ENCODE measurements at regions of chr6 and their contacts with region 1.

Region 1: GRCh38 chr6:110876170-110876773 is 1.7 kb downstream of the AMD1 start:
- DNase-seq: peak; percentile 77 to 78
- H3K4me3 ChIP-seq: peak overlapping the region; percentile 72 to 98 (median 93)
- H3K27ac ChIP-seq: peak overlapping the region; percentile 94 to 97
- H3K4me1 ChIP-seq: peaks cover 0 to 8% of the 10 kb centered on the region in 2 donors
- H3K27me3 ChIP-seq: no peaks in the 10 kb centered on the region
- CTCF ChIP-seq: no peak
- POLR2A ChIP-seq: peak; percentile 41

Region 2: GRCh38 chr6:110201151-110201884 is 675.0 kb before region 1 on chr6:
- intact Hi-C with region 1: no loop called
- DNase-seq: no peak
- H3K4me3 ChIP-seq: no peak overlapping the region
- H3K27ac ChIP-seq: no peak overlapping the region
- H3K4me1 ChIP-seq: no peaks in the 10 kb centered on the region
- H3K27me3 ChIP-seq: no peaks in the 10 kb centered on the region
- CTCF ChIP-seq: no peak
- POLR2A ChIP-seq: no peak

Region 3: DNA sequence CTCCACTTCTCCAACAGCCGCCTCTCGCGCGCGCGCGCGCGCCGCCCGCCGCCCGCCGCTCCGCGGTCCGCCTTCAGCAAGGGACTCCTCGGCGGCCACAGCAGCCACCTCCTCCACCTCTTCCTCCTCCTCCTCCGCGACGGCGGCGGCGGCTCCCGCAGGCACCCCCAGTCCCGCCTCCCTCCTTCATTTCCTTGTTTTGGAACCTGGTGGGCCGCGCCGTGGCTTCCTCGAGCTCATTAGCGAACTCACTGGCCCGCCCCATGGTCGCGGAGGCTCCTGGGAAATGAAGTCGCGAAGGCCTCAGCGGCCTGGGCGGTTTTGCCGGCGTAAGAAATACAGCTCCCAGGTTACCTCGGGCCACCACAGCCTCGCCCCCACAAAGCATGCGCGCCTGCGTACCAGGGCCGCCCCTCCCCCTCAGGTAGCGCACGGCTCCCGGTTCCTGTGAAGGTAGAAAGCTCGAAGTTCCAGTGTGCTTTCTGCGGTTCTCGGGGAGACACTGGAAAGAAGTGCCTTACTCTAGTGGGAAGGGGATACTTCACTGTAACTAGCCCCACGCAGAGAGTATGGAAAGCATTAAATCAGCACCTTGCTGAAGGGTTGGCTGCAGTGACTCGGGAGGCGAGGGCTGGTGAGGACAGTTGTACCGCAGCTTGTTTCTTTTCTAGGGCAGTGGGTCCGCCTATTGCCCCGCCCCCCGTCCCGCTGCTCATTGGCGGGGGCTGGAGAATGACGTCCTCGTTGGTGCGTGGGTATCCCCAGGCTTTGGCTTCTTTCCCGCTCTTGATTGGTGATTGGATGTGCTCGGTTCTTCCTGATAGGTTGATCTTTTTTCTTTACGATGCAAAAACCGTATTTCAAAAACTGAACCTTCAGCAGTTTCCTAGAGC is 60.8 kb before region 1 on chr6 and contains the start of gene CDK19:
- intact Hi-C with region 1: loop called (anchors 5 kb)
- DNase-seq: peak; percentile 97 to 98
- H3K4me3 ChIP-seq: peak within 1 kb of the TSS; percentile 86 to 88 (median 86)
- H3K27ac ChIP-seq: peak within 1 kb of the TSS; percentile 92 to 99
- H3K4me1 ChIP-seq: no peaks in the 10 kb centered on the region
- H3K27me3 ChIP-seq: no peaks in the 10 kb centered on the region
- CTCF ChIP-seq: no peak
- POLR2A ChIP-seq: peak; percentile 32
- total RNA-seq, gene CDK19: 14.1 to 17.9 (median 17.9) TPM

Region 4: DNA sequence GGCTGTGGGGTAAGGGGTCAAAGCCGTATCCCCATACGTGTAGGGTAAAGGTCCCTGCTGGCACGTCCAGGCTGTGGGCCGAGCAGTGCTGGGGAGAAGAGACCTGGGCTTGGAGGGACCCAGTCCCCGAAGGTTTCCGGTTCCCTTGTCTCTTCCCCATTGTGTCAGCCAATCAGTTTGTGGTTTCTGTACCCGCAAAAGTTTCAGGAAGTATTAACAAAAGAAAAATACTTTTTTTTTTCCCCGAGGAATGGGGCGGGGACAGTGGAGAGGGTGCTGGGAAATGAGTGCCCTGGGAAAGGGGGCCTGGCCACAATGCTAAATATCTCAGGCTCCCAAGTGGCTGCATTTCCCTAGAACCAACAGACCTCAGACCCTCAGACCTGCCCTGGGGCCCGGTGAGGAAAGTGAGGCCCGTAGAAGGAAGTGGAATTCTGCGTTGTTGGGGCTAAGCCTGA is 16.9 kb before region 1 on chr6:
- intact Hi-C with region 1: no loop called
- DNase-seq: no peak
- H3K4me3 ChIP-seq: peak overlapping the region in 1 of 3 donors; percentile 8
- H3K27ac ChIP-seq: no peak overlapping the region
- H3K4me1 ChIP-seq: no peaks in the 10 kb centered on the region
- H3K27me3 ChIP-seq: no peaks in the 10 kb centered on the region
- CTCF ChIP-seq: no peak
- POLR2A ChIP-seq: no peak